ENCODE measurements at regions of chr2 and their contacts with region 1.

Region 1: GRCh38 chr2:157492189-157492773 is 48.4 kb upstream of the CYTIP start:
- DNase-seq: peak; percentile 63
- H3K4me3 Mint-ChIP-seq: no peak overlapping the region
- H3K27ac Mint-ChIP-seq: no peak overlapping the region
- H3K4me1 Mint-ChIP-seq: peaks cover 71% of the 10 kb centered on the region
- H3K27me3 Mint-ChIP-seq: no peaks in the 10 kb centered on the region

Region 2: GRCh38 chr2:157349949-157350515 is 142.2 kb before region 1 on chr2:
- intact Hi-C with region 1: no loop called
- DNase-seq: no peak
- H3K4me3 Mint-ChIP-seq: no peak overlapping the region
- H3K27ac Mint-ChIP-seq: no peak overlapping the region
- H3K4me1 Mint-ChIP-seq: no peaks in the 10 kb centered on the region
- H3K27me3 Mint-ChIP-seq: peaks cover 2% of the 10 kb centered on the region

Region 3: GRCh38 chr2:157509744-157510143 is 17.5 kb after region 1 on chr2:
- intact Hi-C with region 1: loop called (anchors 2 kb)
- DNase-seq: no peak
- H3K4me3 Mint-ChIP-seq: no peak overlapping the region
- H3K27ac Mint-ChIP-seq: no peak overlapping the region
- H3K4me1 Mint-ChIP-seq: peaks cover 5% of the 10 kb centered on the region
- H3K27me3 Mint-ChIP-seq: peaks cover 13% of the 10 kb centered on the region

Region 4: GRCh38 chr2:157747695-157748370 is 255.6 kb after region 1 on chr2:
- intact Hi-C with region 1: loop called (anchors 10 kb)
- DNase-seq: no peak
- H3K4me3 Mint-ChIP-seq: no peak overlapping the region
- H3K27ac Mint-ChIP-seq: peak overlapping the region; percentile 50
- H3K4me1 Mint-ChIP-seq: peaks cover 65% of the 10 kb centered on the region
- H3K27me3 Mint-ChIP-seq: no peaks in the 10 kb centered on the region